ENCODE measurements at regions of chr3 and their contacts with region 1.

Region 1: GRCh38 chr3:64450396-64450956 is 225.2 kb upstream of the PRICKLE2 start:
- H3K4me3 ChIP-seq: no peak overlapping the region
- H3K27ac ChIP-seq: no peak overlapping the region
- H3K4me1 ChIP-seq: no peaks in the 10 kb centered on the region
- CTCF ChIP-seq: no peak

Region 2: DNA sequence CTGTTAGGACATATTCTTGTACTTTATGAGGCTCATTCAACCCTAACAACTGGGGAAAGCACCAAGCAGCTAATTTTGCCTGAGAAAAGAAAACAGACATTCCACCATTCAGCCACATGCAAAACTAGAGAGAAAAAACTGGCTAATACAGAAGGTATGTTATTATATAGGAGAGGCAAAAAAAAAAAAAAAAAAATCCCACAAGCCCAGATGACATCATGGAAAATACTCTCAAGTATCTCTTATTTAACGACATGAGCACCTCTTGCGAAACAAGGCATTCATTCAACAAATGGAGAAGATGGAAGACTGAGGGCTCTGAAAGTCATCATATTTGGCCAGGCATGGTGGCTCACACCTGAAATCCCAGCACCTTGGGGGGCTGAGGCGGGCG is 286.7 kb before region 1 on chr3:
- CTCF ChIA-PET with region 1: no interaction called
- POLR2A ChIA-PET with region 1: no interaction called
- H3K4me3 ChIP-seq: no peak overlapping the region
- H3K27ac ChIP-seq: no peak overlapping the region; the same call in 1 of the 2 replicates
- H3K4me1 ChIP-seq: peaks cover 29% of the 10 kb centered on the region
- CTCF ChIP-seq: no peak

Region 3: DNA sequence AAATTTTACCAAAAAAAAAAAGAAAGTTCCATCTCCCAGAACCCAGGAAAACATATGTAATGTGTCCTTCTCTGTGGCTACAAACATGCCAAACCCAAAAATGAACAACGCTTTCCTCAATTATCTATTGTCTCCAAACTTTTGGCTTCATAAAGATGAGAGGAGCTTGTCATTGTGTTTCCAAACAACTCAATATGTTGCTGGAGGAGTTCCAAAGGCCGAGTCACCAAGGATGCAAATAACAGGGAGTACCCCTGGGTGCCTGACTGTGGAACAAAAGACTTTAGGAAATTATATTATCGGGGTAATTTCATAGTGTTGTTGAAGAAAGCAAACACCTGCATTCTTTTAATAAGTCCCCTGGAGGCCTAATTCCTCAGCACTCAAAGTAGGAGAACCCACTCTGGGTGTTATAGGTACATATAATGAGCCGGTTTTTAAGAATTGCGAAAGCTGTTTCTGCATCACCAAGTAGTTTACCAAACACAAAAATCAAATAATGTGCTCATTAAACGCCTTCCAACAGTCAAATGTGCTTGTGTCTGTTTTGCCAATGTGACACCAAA is 18.9 kb before region 1 on chr3:
- CTCF ChIA-PET with region 1: no interaction called
- POLR2A ChIA-PET with region 1: no interaction called
- H3K4me3 ChIP-seq: no peak overlapping the region
- H3K27ac ChIP-seq: no peak overlapping the region
- H3K4me1 ChIP-seq: no peaks in the 10 kb centered on the region
- CTCF ChIP-seq: no peak

Region 4: DNA sequence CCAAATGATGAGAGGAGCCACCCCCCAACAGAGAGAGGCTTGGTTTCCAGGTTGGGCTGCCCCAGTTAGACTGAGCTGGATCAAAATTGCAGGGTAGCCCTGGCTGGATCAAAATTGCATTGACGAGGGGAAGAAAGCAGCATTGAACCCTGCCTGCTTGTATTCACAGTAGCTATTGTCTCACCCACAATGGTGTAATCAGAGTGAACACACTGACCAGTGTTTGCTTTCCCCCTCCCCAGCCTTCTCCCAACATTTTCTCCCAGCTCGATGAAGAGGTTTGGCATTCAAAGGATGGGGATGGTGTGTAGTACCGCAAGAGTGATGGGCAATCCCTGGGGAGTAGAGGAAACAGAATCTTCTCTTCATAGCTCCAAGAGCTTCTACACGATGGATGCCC is 13.5 kb after region 1 on chr3:
- CTCF ChIA-PET with region 1: interaction called, 11 read pairs
- POLR2A ChIA-PET with region 1: no interaction called
- H3K4me3 ChIP-seq: no peak overlapping the region
- H3K27ac ChIP-seq: no peak overlapping the region
- H3K4me1 ChIP-seq: no peaks in the 10 kb centered on the region
- CTCF ChIP-seq: no peak

Region 5: GRCh38 chr3:64533617-64534317 is 83.3 kb after region 1 on chr3:
- CTCF ChIA-PET with region 1: no interaction called
- POLR2A ChIA-PET with region 1: no interaction called
- H3K4me3 ChIP-seq: no peak overlapping the region
- H3K27ac ChIP-seq: no peak overlapping the region
- H3K4me1 ChIP-seq: no peaks in the 10 kb centered on the region
- CTCF ChIP-seq: peak; percentile 77